ENCODE measurements at regions of chr9 and their contacts with region 1.

Region 1: DNA sequence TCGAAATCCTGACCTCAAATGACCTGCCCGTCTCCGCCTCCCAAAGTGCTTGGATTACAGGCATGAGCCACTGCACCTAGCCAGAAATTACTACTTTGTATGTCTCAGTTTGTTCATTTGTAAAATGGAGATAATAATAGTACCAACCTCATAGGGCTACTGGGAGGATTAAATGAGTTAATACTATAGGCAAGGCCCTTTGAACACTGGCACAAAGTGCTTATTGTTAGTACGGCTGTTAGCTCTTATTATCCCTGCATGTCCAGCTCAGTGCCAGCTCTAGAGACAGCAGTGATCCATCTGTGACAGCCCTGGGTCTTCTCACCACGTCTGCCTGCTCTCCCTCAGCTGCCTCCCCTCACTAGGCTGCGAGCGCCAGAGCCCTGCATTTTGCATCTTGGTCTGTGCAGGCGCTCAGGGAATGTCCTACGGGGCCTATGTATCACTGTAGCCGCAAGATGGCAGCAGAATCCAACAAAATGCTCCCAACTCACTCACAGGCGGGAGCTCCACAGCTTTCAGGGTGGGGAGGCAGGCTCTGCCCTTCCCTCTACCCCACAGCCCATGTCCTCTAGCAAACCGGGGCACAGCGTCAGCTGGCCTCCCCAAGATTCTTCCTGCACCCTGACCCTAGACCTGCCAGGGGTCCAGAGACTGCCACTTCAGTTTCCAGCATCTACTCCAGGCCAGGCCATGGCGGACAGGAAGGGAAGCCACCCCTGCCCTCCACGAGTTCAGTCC is 17.7 kb upstream of the AKNA start:
- DNase-seq: peak; percentile 75
- H3K4me3 ChIP-seq: no peak overlapping the region
- H3K27ac ChIP-seq: no peak overlapping the region
- H3K4me1 ChIP-seq: no peaks in the 10 kb centered on the region
- H3K27me3 ChIP-seq: peaks cover 0 to 2% of the 10 kb centered on the region in 2 experiments
- CTCF ChIP-seq: peak; percentile 75 to 84
- POLR2A ChIP-seq: no peak

Region 2: GRCh38 chr9:114385412-114386181 is 19.9 kb before region 1 on chr9:
- CTCF ChIA-PET with region 1: interaction called, 11 read pairs
- POLR2A ChIA-PET with region 1: no interaction called
- dilution Hi-C with region 1: no loop called
- intact Hi-C with region 1: no loop called
- DNase-seq: peak; percentile 66
- H3K4me3 ChIP-seq: no peak overlapping the region
- H3K27ac ChIP-seq: peak overlapping the region; percentile 58
- H3K4me1 ChIP-seq: peaks cover 31% of the 10 kb centered on the region
- H3K27me3 ChIP-seq: no peaks in the 10 kb centered on the region
- CTCF ChIP-seq: no peak
- POLR2A ChIP-seq: no peak

Region 3: DNA sequence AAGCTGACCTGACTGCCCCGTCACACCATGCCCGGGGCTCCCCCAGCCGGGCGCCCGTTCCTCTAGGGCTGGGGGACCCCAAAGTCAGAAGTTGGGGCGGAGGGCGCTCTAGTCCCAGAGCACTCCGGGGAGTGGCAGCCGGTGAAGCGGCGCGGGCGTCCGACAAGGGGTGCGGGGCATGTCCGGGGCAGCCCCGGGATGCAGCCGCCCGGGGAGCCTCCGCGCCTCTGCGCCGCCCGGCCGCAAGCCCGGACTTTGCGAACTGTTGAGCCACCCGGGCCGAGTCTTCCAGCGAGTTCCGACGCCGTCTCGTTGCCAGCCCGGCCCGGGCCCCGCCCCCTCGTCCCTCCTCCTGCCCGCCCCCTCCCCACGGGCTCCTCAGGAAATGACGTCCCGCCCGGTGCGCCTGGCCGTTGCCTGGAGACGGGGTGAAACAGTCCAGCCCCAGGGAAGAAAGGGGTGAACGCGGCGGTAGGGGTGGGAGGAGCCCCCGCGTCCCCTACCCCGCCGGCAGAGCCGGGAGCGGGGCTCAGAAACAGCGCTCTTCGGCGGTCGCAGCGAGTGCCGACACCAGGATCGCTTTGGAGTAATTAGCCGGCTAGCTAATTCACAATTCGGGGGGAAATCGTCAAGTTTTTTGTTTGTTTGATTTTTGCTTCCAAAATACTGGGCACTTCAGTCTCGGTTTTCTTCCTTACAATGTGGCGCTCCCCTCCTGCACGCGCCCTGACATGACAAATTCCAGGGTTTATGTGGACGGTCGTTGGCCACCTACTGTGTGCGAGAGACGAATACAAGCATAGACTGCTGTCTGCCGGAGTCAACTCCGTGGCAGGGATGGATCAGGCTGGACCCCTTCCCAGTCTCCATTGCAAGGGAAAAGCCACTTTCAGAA is 100.0 kb after region 1 on chr9 and contains the start of gene WHRN:
- CTCF ChIA-PET with region 1: interaction called, 7 read pairs
- POLR2A ChIA-PET with region 1: no interaction called
- dilution Hi-C with region 1: no loop called
- intact Hi-C with region 1: loop called (anchors 1 kb)
- DNase-seq: peak; percentile 83
- H3K4me3 ChIP-seq: peak within 1 kb of the TSS; percentile 11 to 47 (median 39)
- H3K27ac ChIP-seq: no peak within 1 kb of the TSS
- H3K4me1 ChIP-seq: peaks cover 6% of the 10 kb centered on the region
- H3K27me3 ChIP-seq: peaks cover 57 to 82% of the 10 kb centered on the region in 2 experiments
- CTCF ChIP-seq: no peak
- POLR2A ChIP-seq: no peak
- total RNA-seq, gene WHRN: 0.69 and 1.1 TPM in 2 replicates

Region 4: DNA sequence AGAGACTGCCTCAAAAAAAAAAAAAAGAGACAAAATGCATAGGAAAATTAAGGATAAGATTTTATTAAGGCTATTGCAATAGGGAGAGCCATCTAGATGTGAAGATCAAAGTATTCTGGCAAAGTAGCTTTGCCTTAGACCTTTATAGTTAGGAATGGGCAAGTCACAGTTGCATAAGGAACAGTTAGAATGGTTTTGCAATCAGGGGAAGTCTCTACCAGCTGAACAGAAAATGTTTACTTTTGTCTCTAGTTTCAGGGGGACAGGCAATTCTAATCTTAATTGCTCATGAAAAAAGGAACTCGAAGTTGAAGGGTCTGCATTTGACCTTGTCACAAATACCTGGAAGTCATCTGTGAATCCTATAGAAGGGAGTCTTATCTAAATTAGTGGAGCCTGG is 169.0 kb after region 1 on chr9:
- CTCF ChIA-PET with region 1: no interaction called
- POLR2A ChIA-PET with region 1: no interaction called
- dilution Hi-C with region 1: no loop called
- intact Hi-C with region 1: no loop called
- DNase-seq: no peak
- H3K4me3 ChIP-seq: no peak overlapping the region
- H3K27ac ChIP-seq: no peak overlapping the region
- H3K4me1 ChIP-seq: no peaks in the 10 kb centered on the region
- H3K27me3 ChIP-seq: no peaks in the 10 kb centered on the region
- CTCF ChIP-seq: no peak
- POLR2A ChIP-seq: no peak

Region 5: GRCh38 chr9:114681594-114682332 is 276.3 kb after region 1 on chr9 and contains the start of gene TEX48:
- CTCF ChIA-PET with region 1: interaction called, 18 read pairs
- POLR2A ChIA-PET with region 1: no interaction called
- dilution Hi-C with region 1: no loop called
- intact Hi-C with region 1: loop called (anchors 1 kb)
- DNase-seq: peak; percentile 52
- H3K4me3 ChIP-seq: no peak within 1 kb of the TSS
- H3K27ac ChIP-seq: no peak within 1 kb of the TSS
- H3K4me1 ChIP-seq: peaks cover 23% of the 10 kb centered on the region
- H3K27me3 ChIP-seq: no peaks in the 10 kb centered on the region
- CTCF ChIP-seq: peak; percentile 67 to 78
- POLR2A ChIP-seq: no peak
- total RNA-seq, gene TEX48: not detected in 2 replicates

Region 6: DNA sequence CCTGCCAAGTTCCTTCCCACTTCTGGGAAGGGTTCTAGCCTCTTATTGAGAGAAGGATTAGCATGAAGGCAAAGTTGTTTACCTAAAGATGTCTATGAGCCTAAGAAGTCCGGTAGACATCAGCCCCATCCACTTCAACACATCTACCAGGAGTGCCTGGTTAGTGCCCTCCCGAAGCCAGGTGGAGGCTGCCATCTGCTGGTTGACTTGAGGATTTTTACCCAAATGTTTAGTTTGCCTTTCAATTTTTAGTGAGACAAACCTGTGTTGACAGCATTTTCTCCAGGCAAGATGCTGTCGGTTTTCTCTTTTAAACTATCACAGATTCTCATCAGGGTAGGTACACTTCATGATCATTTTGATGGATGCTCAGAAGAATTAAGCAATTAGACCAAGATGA is 608.5 kb after region 1 on chr9:
- CTCF ChIA-PET with region 1: interaction called, 33 read pairs
- POLR2A ChIA-PET with region 1: no interaction called
- dilution Hi-C with region 1: no loop called
- intact Hi-C with region 1: loop called (anchors 1 kb)
- DNase-seq: peak; percentile 47
- H3K4me3 ChIP-seq: no peak overlapping the region
- H3K27ac ChIP-seq: no peak overlapping the region
- H3K4me1 ChIP-seq: no peaks in the 10 kb centered on the region
- H3K27me3 ChIP-seq: peaks cover 3 to 5% of the 10 kb centered on the region in 2 experiments
- CTCF ChIP-seq: peak; percentile 62 to 72
- POLR2A ChIP-seq: no peak

Measured in endothelial cell of umbilical vein (primary cell).